ENCODE measurements at regions of chr4 and their contacts with region 1.

Region 1: DNA sequence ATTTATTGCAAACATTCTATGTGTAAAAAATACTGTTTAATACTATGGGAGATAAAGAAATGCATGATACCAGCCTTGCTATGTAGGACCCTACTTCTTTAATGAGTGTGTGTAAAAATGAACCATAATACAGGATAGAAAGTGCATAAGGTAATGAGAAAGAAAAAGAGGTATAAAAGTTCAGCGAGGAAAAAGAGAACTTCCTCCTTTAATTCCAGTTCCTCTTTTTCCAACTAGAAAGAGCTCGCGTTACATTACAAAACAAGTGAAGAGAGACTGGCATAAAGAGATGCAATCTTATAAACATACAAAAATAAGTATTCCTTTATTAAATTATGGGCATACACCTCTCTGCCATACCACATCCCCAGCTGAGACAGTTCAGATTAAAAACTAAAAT is 77.4 kb downstream of the ANKRD17 start:
- DNase-seq: no peak
- ATAC-seq: no peak
- H3K4me3 ChIP-seq: no peak overlapping the region
- H3K27ac ChIP-seq: no peak overlapping the region
- H3K4me1 ChIP-seq: peaks cover 42% of the 10 kb centered on the region
- H3K27me3 ChIP-seq: no peaks in the 10 kb centered on the region
- CTCF ChIP-seq: no peak

Region 2: DNA sequence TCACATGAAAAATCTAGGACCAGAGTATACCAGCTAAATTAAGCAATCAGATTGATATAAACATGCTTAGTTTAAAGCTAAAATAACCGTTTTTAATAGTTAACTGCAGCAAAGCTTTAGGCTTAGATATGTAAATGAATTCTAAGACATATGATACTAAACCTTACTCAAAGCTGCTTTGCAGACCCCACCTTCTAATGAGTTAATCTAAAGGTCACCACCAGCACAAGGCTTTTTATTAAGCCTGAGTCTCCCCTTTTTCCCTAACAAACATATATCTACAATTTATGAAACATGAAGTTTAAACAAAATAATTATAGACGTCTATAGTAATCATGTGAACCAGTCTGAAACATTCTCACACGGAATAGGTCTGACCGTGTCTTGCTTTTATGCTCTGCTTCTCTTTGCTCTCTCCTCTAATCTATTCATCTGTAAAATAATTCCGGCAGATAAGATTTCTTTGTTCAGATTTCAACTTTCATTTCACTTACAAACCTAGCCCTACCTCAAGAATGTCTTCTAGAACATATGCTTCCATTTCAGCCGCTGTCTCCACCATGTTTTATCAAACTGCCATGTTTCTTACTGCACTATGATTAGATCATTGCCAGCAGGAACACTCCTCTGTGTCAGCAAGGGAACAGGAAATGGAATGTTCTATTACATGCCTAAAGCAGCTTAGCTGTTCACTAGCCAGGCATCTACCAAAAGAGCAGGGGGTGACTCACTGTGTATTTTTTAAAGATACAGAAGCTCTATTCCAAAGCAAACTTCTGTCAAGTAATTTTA is 41.4 kb after region 1 on chr4:
- intact Hi-C with region 1: loop called in 1 of 2 experiments (anchors 5 kb)
- DNase-seq: no peak
- ATAC-seq: peak; percentile 99 to 100 (median 100)
- H3K4me3 ChIP-seq: peak overlapping the region; percentile 71
- H3K27ac ChIP-seq: peak overlapping the region; percentile 96
- H3K4me1 ChIP-seq: peaks cover 40% of the 10 kb centered on the region
- H3K27me3 ChIP-seq: no peaks in the 10 kb centered on the region
- CTCF ChIP-seq: no peak